A549 (cell line): ENCODE measurements at regions of chr11 and their contacts with region 1.

Region 1: DNA sequence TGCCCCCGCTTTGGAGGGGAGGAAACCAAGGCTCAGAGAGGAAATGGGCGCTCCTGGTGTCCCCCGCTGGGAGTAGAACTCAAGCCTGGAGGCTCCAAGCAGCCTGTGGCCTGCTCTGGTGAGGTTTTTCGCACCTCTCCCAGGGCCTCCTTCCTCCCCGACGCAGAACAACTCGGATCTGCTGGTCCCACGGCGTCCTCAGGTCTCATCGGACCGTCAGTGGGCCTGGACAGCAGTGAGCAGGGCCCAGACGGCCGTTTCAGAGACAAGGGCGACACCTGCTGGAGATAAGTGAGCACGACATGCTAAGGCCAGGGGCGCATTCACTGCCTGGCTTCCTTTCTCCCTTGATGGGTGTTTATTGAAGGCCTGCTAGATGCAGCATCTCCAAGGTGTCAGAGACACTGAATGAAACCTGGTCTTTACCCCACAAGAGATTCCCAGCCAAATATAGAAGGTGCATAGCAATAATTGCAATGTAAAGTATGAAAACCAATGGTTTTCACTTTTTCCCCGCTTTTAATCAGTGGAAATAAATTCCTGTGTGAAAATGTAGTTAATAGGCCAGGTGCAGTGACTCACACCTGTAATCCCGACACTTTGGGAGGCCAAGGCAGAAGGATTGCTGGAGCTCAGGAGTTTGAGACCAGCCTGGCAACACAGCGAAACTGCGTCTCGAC is 26.9 kb upstream of the CD82 start:
- DNase-seq: peak; percentile 69 to 91
- ATAC-seq: peak; percentile 88 to 99
- H3K4me3 ChIP-seq: no peak overlapping the region
- H3K27ac ChIP-seq: peak overlapping the region in 1 of 2 experiments; percentile 69; a peak in 3 of 6 replicates
- H3K4me1 ChIP-seq: no peaks in the 10 kb centered on the region
- CTCF ChIP-seq: peak; percentile 88
- EP300 ChIP-seq: no peak
- POLR2A ChIP-seq: no peak
- RAD21 ChIP-seq: peak; percentile 97

Region 2: GRCh38 chr11:44104481-44105294 is 433.8 kb before region 1 on chr11:
- CTCF ChIA-PET with region 1: interaction called, 14 read pairs
- POLR2A ChIA-PET with region 1: no interaction called
- DNase-seq: peak; percentile 6 to 37
- ATAC-seq: peak; percentile 60 to 68; a peak in 4 of 6 replicates
- H3K4me3 ChIP-seq: no peak overlapping the region
- H3K27ac ChIP-seq: no peak overlapping the region
- H3K4me1 ChIP-seq: no peaks in the 10 kb centered on the region
- CTCF ChIP-seq: no peak
- EP300 ChIP-seq: no peak
- POLR2A ChIP-seq: no peak
- RAD21 ChIP-seq: no peak

Region 3: DNA sequence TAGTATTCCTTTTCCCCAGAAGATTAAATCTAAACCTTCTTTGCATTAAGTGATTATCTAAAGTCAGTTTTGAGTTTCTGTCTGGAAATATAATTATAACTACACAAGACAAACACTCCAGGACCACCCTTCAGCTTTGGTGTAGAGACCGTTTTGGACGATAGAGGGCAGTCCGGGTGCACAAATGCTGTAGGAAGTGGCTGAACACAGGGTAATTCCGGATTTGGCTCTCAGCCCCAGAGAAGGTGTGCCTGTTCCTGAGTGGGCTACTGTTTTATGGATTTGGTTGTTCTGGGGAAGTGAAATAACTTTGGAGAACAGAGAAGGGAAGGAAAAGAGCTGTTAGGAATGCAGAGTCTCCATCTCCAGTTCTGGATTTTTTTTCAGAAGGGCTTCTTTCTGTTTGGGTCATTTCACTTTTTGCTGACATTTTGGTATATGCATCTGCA is 428.3 kb before region 1 on chr11:
- CTCF ChIA-PET with region 1: interaction called, 14 read pairs
- POLR2A ChIA-PET with region 1: no interaction called
- DNase-seq: peak; percentile 49 to 72
- ATAC-seq: peak; percentile 93 to 96
- H3K4me3 ChIP-seq: no peak overlapping the region
- H3K27ac ChIP-seq: no peak overlapping the region
- H3K4me1 ChIP-seq: no peaks in the 10 kb centered on the region
- CTCF ChIP-seq: peak; percentile 81
- EP300 ChIP-seq: no peak
- POLR2A ChIP-seq: no peak
- RAD21 ChIP-seq: peak; percentile 76 to 79

Region 4: DNA sequence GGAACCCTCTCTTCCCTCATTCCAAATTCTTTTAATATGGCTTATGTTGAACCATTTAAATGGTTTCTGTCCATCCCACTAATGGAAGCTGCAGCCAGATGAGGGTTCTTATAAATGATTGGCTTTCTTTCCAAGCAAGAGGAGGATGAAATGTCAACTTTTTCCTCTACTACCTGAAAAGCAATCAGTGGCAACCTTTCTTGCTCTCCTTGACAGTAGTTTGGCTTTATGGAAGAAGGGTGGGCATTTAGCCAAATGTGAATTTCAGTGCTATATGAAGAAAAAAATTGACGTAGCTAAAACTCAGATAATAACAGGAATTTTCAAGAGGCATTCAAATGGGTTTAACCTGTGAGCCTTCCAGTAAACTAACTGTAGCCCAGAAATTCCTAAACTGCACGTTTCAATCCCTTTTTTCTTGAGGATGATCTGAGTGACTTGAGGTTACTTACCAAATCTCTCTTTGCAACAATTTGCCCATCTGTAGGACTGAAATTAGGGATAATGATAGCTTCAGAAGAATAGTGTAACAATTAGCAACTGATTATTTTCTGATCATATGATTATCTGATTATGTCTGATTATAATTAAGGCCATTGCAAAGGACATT is 352.1 kb before region 1 on chr11:
- CTCF ChIA-PET with region 1: no interaction called
- POLR2A ChIA-PET with region 1: no interaction called
- DNase-seq: no peak
- ATAC-seq: no peak
- H3K4me3 ChIP-seq: no peak overlapping the region
- H3K27ac ChIP-seq: no peak overlapping the region
- H3K4me1 ChIP-seq: no peaks in the 10 kb centered on the region
- CTCF ChIP-seq: no peak
- EP300 ChIP-seq: no peak
- POLR2A ChIP-seq: no peak
- RAD21 ChIP-seq: no peak

Region 5: DNA sequence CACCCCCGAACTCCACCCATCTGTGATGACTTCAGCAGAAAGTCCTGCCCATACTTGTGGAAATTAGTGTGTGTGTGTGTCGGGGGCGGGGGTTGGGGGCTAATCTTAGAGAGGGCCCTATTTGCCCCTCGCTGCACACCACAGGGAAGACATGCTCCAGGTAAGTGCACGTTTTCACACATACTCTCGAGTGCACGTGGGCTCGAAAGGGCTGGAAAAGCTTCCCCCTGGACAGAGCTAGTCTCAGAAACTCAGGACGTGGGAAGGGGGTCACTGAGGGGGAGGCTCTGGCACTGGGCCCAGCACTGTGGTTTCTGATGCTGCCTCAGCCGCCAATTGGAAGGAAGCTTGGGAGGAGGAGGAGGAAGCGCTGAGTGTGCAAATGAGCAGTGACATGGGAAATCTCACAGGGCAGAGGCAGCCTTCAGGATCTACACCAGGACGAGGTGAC is 13.7 kb before region 1 on chr11:
- CTCF ChIA-PET with region 1: interaction called, 71 read pairs
- POLR2A ChIA-PET with region 1: no interaction called
- DNase-seq: no peak
- ATAC-seq: no peak
- H3K4me3 ChIP-seq: no peak overlapping the region
- H3K27ac ChIP-seq: no peak overlapping the region
- H3K4me1 ChIP-seq: peaks cover 8% of the 10 kb centered on the region; the same call in 1 of the 3 replicates
- CTCF ChIP-seq: no peak
- EP300 ChIP-seq: no peak
- POLR2A ChIP-seq: no peak
- RAD21 ChIP-seq: no peak

Region 6: DNA sequence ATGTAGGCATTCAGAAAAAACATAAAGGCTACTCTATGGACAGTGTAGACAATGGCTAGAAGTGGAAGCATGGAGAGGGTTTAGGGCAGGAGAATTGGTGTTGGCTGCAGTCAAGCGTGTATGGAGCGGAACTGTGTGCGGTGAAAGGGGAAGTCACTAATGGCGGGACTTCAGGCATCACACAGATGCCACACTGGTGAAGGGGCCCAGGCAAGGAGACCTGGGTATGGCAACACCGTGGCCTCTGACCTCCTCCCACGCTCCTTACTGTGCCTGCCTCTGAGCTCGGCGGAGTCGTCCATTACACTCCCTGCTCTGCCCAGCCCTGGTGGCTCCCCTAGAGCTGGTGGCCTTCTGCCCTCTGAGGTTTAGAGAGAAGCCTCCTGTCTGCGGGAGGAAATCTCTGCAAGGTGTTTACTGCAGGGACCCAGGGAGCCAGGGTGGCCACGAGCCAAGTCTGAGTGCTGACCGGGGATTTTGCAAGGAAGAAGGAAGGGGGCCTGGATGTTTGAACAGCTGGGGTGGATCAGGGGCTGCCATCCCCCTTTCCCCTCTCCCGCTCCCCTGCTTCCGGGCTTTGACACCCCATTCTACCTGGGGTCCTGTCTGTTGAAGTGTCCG is 113.1 kb after region 1 on chr11:
- CTCF ChIA-PET with region 1: no interaction called
- POLR2A ChIA-PET with region 1: no interaction called
- DNase-seq: no peak
- ATAC-seq: peak; percentile 32 to 44; a peak in 3 of 6 replicates
- H3K4me3 ChIP-seq: no peak overlapping the region
- H3K27ac ChIP-seq: no peak overlapping the region
- H3K4me1 ChIP-seq: no peaks in the 10 kb centered on the region
- CTCF ChIP-seq: no peak
- EP300 ChIP-seq: no peak
- POLR2A ChIP-seq: no peak
- RAD21 ChIP-seq: no peak

Region 7: DNA sequence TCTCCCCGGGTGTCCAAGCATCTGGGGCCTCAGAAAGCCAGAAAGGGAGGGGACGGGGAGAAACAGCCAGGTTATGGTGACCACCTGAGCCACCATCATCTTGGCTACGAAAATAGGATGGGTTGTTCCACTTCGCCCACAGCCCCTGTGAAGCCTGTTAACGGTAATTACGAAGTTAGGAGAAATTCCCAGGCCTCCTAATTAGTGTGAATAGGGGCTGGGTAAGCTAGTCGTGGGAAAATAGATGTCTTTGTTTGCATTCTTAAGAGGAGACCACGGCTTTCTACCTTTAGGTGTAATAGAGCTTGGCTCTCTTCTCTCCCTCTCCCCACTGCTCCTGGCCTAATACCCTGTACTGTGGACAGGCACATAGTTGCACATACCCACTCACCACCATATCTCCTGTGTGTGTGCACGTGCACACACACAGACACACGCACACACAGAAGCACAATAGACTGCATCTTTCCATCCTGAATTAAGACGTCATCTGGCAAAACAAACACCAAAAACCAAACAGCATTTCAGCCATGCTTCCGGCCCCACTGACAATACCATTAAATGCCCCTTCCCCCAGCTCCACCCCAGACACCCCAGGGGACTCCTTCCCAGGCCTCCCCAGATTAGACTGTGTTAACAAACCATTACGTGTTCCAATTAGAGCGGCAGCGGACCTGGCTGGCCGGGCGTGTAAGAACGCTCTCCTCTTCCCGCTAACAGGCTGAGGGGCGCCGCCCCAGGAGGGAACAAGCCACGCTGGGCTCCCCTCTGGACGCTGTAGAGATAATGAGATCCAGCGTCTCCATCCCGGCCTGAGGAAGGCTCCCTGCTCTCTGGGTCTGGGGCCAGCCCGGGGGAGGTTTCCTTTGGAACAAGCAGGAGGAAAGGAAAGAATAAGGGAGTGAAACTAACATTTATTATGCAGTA is 339.3 kb after region 1 on chr11:
- CTCF ChIA-PET with region 1: no interaction called
- POLR2A ChIA-PET with region 1: no interaction called
- DNase-seq: no peak
- ATAC-seq: no peak
- H3K4me3 ChIP-seq: no peak overlapping the region
- H3K27ac ChIP-seq: no peak overlapping the region
- H3K4me1 ChIP-seq: no peaks in the 10 kb centered on the region; the same call in 2 of the 3 replicates
- CTCF ChIP-seq: no peak
- EP300 ChIP-seq: no peak
- POLR2A ChIP-seq: no peak
- RAD21 ChIP-seq: no peak